CD8-positive, alpha-beta T cell (primary cell): ENCODE measurements at regions of chr15 and their contacts with region 1.

Region 1: GRCh38 chr15:85689729-85690128 is 105.0 kb downstream of the KLHL25 start:
- DNase-seq: peak; percentile 43 to 89 (median 70)
- ATAC-seq: peak; percentile 84
- H3K4me3 ChIP-seq: peak overlapping the region; percentile 62
- H3K4me3 Mint-ChIP-seq: peak overlapping the region; percentile 97
- H3K27ac ChIP-seq: peak overlapping the region; percentile 77 to 86
- H3K27ac Mint-ChIP-seq: peak overlapping the region; percentile 99
- H3K4me1 ChIP-seq: peaks cover 60% of the 10 kb centered on the region
- H3K4me1 Mint-ChIP-seq: peaks cover 76% of the 10 kb centered on the region
- H3K27me3 ChIP-seq: no peaks in the 10 kb centered on the region
- H3K27me3 Mint-ChIP-seq: no peaks in the 10 kb centered on the region
- CTCF ChIP-seq: no peak

Region 2: DNA sequence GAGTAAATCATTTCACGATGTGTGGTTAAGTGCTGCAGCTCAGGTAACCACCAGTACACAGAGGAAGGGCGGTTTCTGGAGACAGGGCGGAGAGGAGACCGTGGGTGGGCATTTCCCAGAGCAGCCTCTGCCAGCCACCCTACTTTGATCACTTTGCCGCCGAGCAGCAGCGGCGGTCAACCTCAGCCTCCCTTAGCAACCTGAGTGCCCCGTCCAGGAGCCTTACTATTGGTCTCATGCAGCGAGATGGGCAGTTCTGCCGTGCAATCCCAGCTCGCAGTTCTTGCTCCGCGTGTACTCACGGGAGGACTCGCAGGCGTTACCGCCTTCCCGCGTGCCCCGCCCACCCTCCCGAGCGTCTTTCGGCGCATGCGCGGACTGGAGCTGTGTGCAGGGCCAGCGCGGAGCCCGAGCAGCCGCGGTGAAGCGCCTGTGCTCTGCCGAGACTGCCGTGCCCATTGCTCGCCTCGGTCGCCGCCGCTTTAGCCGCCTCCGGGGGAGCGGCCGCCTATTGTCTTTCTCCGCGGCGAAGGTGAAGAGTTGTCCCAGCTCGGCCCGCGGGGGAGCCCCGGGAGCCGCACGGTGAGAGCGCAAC is 309.4 kb before region 1 on chr15 and contains the start of gene AKAP13:
- CTCF ChIA-PET with region 1: no interaction called
- POLR2A ChIA-PET with region 1: interaction called, 3 read pairs
- intact Hi-C with region 1: loop called (anchors 5 kb)
- DNase-seq: peak; percentile 87 to 99 (median 93)
- ATAC-seq: peak; percentile 72
- H3K4me3 ChIP-seq: peak within 1 kb of the TSS; percentile 55 to 68
- H3K4me3 Mint-ChIP-seq: peak within 1 kb of the TSS; percentile 87
- H3K27ac ChIP-seq: peak within 1 kb of the TSS; percentile 56 to 66
- H3K27ac Mint-ChIP-seq: peak within 1 kb of the TSS; percentile 94
- H3K4me1 ChIP-seq: peaks cover 48% of the 10 kb centered on the region
- H3K4me1 Mint-ChIP-seq: peaks cover 56% of the 10 kb centered on the region
- H3K27me3 ChIP-seq: no peaks in the 10 kb centered on the region
- H3K27me3 Mint-ChIP-seq: no peaks in the 10 kb centered on the region
- CTCF ChIP-seq: no peak
- total RNA-seq, gene AKAP13: 255 to 267 TPM

Region 3: DNA sequence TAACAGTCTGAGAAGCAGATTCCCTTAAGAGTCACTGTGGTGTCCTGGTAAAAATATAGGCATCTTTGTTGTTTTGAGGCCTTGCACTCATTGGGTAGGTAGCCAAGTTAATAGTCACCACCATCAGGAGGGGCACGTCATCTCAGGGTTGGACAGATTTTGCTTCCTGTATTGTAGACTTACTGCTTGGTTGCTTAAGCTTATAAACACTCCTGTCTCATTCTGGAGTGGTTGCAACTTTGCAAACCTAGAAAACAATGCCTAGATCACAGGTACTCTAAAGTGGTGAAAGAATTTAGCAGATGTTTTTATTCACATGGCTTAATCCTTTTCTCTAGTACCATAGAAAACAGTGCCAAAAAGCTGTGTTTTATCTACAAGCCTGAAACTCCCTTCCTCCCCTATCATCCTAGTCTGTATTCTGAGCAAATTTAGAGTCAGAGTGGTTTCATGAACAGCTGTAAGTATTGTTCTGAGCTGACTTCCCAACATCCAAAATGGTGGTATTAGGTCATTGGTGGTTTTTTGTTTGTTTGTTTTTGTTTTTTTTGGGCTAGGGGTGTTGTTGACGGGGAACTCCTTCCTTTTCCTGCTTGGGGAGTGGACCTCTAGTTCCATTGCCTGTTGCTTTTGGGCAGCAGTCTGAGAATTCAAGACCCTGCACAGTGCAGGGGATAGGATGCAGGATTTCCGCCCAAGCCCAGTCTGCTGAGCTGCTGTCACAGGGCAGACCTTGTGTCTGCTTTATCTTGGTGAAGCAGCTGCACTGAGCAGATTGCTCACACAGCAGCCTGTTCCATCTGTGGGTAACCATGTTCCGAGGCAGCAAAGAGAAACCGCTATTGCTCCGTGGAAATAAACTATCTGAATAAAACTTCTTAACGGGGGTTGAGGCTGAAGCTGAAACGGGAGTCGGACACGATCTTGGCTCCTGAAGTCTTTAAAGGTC is 107.3 kb before region 1 on chr15:
- CTCF ChIA-PET with region 1: no interaction called
- POLR2A ChIA-PET with region 1: interaction called, 16 read pairs
- intact Hi-C with region 1: no loop called
- DNase-seq: peak; percentile 24 to 84 (median 75)
- ATAC-seq: peak; percentile 71
- H3K4me3 ChIP-seq: peak overlapping the region; percentile 54 to 57
- H3K4me3 Mint-ChIP-seq: peak overlapping the region; percentile 84
- H3K27ac ChIP-seq: peak overlapping the region; percentile 88 to 93
- H3K27ac Mint-ChIP-seq: peak overlapping the region; percentile 95
- H3K4me1 ChIP-seq: peaks cover 50% of the 10 kb centered on the region
- H3K4me1 Mint-ChIP-seq: peaks cover 75% of the 10 kb centered on the region
- H3K27me3 ChIP-seq: no peaks in the 10 kb centered on the region
- H3K27me3 Mint-ChIP-seq: no peaks in the 10 kb centered on the region
- CTCF ChIP-seq: no peak

Region 4: DNA sequence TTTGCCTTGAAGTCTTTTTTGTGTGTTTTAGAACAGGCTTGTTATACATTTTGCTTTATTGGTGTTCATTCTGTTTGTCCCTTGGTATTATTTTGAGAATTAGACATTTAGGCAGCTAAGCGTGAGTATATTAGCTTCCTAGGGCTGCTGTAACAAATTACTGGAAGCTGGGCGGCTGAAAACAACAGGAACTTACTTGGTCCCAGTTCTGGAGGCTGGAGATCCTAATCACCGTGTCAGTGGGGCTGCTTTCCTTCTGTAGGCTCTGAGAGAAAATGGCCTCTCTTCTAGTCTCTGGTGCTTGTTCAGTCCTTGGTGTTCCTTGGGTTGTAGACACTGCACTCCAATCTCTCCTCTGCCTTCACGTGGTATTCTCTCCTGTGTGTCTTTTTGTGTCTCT is 37.3 kb before region 1 on chr15:
- CTCF ChIA-PET with region 1: no interaction called
- POLR2A ChIA-PET with region 1: interaction called, 8 read pairs
- intact Hi-C with region 1: loop called in 1 of 2 experiments (anchors 5 kb)
- DNase-seq: no peak
- ATAC-seq: no peak
- H3K4me3 ChIP-seq: no peak overlapping the region
- H3K4me3 Mint-ChIP-seq: no peak overlapping the region
- H3K27ac ChIP-seq: no peak overlapping the region
- H3K27ac Mint-ChIP-seq: peak overlapping the region; percentile 20
- H3K4me1 ChIP-seq: peaks cover 4% of the 10 kb centered on the region
- H3K4me1 Mint-ChIP-seq: peaks cover 10% of the 10 kb centered on the region
- H3K27me3 ChIP-seq: no peaks in the 10 kb centered on the region
- H3K27me3 Mint-ChIP-seq: no peaks in the 10 kb centered on the region
- CTCF ChIP-seq: no peak

Region 5: GRCh38 chr15:85679231-85679630 is 10.5 kb before region 1 on chr15:
- CTCF ChIA-PET with region 1: no interaction called
- POLR2A ChIA-PET with region 1: no interaction called
- intact Hi-C with region 1: no loop called
- DNase-seq: no peak
- ATAC-seq: no peak
- H3K4me3 ChIP-seq: no peak overlapping the region
- H3K4me3 Mint-ChIP-seq: no peak overlapping the region
- H3K27ac ChIP-seq: no peak overlapping the region
- H3K27ac Mint-ChIP-seq: no peak overlapping the region
- H3K4me1 ChIP-seq: no peaks in the 10 kb centered on the region
- H3K4me1 Mint-ChIP-seq: no peaks in the 10 kb centered on the region
- H3K27me3 ChIP-seq: no peaks in the 10 kb centered on the region
- H3K27me3 Mint-ChIP-seq: no peaks in the 10 kb centered on the region
- CTCF ChIP-seq: no peak

Region 6: GRCh38 chr15:85702321-85703101 is 12.8 kb after region 1 on chr15:
- CTCF ChIA-PET with region 1: interaction called, 9 read pairs
- POLR2A ChIA-PET with region 1: interaction called, 60 read pairs
- intact Hi-C with region 1: loop called (anchors 1 kb)
- DNase-seq: peak in 5 of 9 experiments; percentile 17 to 88 (median 39)
- ATAC-seq: peak; percentile 40
- H3K4me3 ChIP-seq: peak overlapping the region; percentile 3 to 24
- H3K4me3 Mint-ChIP-seq: peak overlapping the region; percentile 70
- H3K27ac ChIP-seq: peak overlapping the region; percentile 70 to 97
- H3K27ac Mint-ChIP-seq: peak overlapping the region; percentile 94
- H3K4me1 ChIP-seq: peaks cover 64% of the 10 kb centered on the region
- H3K4me1 Mint-ChIP-seq: peaks cover 78% of the 10 kb centered on the region
- H3K27me3 ChIP-seq: no peaks in the 10 kb centered on the region
- H3K27me3 Mint-ChIP-seq: no peaks in the 10 kb centered on the region
- CTCF ChIP-seq: no peak

Region 7: GRCh38 chr15:85723960-85724945 is 34.5 kb after region 1 on chr15:
- CTCF ChIA-PET with region 1: no interaction called
- POLR2A ChIA-PET with region 1: interaction called, 3 read pairs
- intact Hi-C with region 1: loop called in 1 of 2 experiments (anchors 5 kb)
- DNase-seq: peak in 1 of 9 experiments; percentile 68
- ATAC-seq: peak; percentile 34
- H3K4me3 ChIP-seq: no peak overlapping the region
- H3K4me3 Mint-ChIP-seq: peak overlapping the region; percentile 16
- H3K27ac ChIP-seq: peak overlapping the region; percentile 32 to 69
- H3K27ac Mint-ChIP-seq: peak overlapping the region; percentile 90
- H3K4me1 ChIP-seq: no peaks in the 10 kb centered on the region
- H3K4me1 Mint-ChIP-seq: peaks cover 28% of the 10 kb centered on the region
- H3K27me3 ChIP-seq: no peaks in the 10 kb centered on the region
- H3K27me3 Mint-ChIP-seq: no peaks in the 10 kb centered on the region
- CTCF ChIP-seq: no peak

Region 8: DNA sequence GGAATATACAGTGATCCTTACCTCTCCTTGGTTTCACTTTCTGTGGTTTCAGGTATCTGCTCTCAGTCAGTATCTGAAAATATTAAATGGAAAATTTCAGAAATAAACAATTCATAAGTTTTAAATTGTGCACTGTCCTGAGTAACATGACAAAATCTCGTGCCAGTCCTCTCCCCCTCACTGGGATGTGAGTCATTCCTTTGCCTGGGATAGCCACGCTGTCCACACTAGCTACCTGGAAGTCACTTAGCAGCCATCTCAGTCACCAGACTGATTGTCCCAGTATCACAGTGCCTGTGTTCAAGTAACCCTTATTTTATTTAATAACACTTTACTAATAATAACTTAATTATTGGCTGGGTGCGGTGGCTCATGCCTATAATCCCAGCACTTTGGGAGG is 120.3 kb after region 1 on chr15:
- CTCF ChIA-PET with region 1: no interaction called
- POLR2A ChIA-PET with region 1: no interaction called
- intact Hi-C with region 1: no loop called
- DNase-seq: no peak
- ATAC-seq: no peak
- H3K4me3 ChIP-seq: no peak overlapping the region
- H3K4me3 Mint-ChIP-seq: no peak overlapping the region
- H3K27ac ChIP-seq: no peak overlapping the region
- H3K27ac Mint-ChIP-seq: no peak overlapping the region
- H3K4me1 ChIP-seq: no peaks in the 10 kb centered on the region
- H3K4me1 Mint-ChIP-seq: no peaks in the 10 kb centered on the region
- H3K27me3 ChIP-seq: no peaks in the 10 kb centered on the region
- H3K27me3 Mint-ChIP-seq: no peaks in the 10 kb centered on the region
- CTCF ChIP-seq: no peak